SK-N-SH (cell line): ENCODE measurements at regions of chr10 and their contacts with region 1.

Region 1: GRCh38 chr10:79407811-79408795 is 37.3 kb downstream of the ZCCHC24 start:
- DNase-seq: peak; percentile 92
- H3K4me3 ChIP-seq: no peak overlapping the region
- H3K27ac ChIP-seq: peak overlapping the region; percentile 24 to 95; a peak in 3 of 4 replicates
- H3K4me1 ChIP-seq: peaks cover 25 to 70% of the 10 kb centered on the region in 2 experiments
- H3K27me3 ChIP-seq: no peaks in the 10 kb centered on the region
- CTCF ChIP-seq: no peak
- EP300 ChIP-seq: peak; percentile 82 to 91
- RAD21 ChIP-seq: peak; percentile 21; the same call in 1 of the 2 replicates

Region 2: GRCh38 chr10:79358783-79359182 is 49.3 kb before region 1 on chr10:
- CTCF ChIA-PET with region 1: no interaction called
- POLR2A ChIA-PET with region 1: no interaction called
- DNase-seq: no peak
- H3K4me3 ChIP-seq: no peak overlapping the region
- H3K27ac ChIP-seq: no peak overlapping the region
- H3K4me1 ChIP-seq: no peaks in the 10 kb centered on the region
- H3K27me3 ChIP-seq: no peaks in the 10 kb centered on the region
- CTCF ChIP-seq: no peak
- EP300 ChIP-seq: no peak
- RAD21 ChIP-seq: no peak

Region 3: DNA sequence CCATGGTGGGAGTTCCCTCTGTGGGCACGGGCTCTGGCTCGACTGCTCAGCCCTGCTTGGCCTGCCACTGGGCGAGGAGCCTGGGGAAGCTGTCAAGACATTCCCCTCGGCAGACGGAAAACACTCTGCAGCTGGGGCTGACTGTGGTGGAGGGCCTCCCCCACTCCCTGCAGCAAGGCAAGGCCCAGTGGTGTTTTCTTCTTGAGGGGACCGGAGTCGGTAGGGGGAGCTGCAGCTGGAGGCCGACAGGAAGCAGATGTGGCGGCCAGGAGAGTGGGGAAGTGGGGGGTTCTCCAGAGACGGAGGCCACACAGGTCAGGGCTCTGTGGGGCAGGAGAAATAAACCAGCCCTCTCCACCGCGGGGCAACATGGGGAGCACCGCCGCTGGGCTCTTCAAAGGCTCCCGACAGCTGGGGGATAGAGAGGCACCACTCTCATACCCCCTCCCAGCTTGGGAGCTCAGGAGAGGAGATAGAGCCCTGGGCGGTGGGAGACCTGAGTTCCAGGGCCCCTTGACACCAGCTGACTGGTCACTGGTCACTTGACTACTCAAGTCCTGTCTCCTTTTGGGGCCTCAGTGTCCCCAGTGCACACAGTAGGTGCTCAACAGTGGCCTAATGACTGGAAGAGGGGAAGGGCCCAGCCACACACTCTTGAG is 17.4 kb before region 1 on chr10:
- CTCF ChIA-PET with region 1: interaction called, 16 read pairs
- POLR2A ChIA-PET with region 1: no interaction called
- DNase-seq: peak; percentile 32
- H3K4me3 ChIP-seq: no peak overlapping the region
- H3K27ac ChIP-seq: no peak overlapping the region
- H3K4me1 ChIP-seq: peaks cover 0 to 20% of the 10 kb centered on the region in 2 experiments; a peak in 1 of 4 replicates
- H3K27me3 ChIP-seq: no peaks in the 10 kb centered on the region
- CTCF ChIP-seq: no peak
- EP300 ChIP-seq: no peak
- RAD21 ChIP-seq: no peak

Region 4: DNA sequence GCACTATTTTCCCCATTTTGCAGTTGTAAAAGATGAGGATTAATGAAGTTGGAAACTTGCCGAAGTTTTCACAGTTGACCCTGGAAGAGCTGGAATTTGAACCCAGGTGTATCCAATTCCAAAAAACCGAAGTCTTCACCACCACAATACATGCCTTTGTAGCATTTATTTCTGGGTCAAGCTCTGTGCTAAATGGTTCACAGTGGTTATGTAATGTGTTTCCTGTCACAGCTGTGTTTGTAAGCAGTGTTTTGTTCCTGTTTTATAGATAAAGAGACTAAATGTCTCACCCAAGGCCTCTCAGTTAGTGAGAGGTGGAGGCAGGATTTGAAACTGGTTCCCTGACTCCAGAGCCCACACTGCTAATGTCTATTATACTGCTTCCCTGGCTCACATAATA is 134.5 kb after region 1 on chr10:
- CTCF ChIA-PET with region 1: no interaction called
- POLR2A ChIA-PET with region 1: no interaction called
- DNase-seq: no peak
- H3K4me3 ChIP-seq: no peak overlapping the region
- H3K27ac ChIP-seq: no peak overlapping the region
- H3K4me1 ChIP-seq: no peaks in the 10 kb centered on the region
- H3K27me3 ChIP-seq: no peaks in the 10 kb centered on the region; the same call in 1 of the 2 replicates
- CTCF ChIP-seq: no peak
- EP300 ChIP-seq: no peak
- RAD21 ChIP-seq: no peak